ENCODE measurements at regions of chr20 and their contacts with region 1.

Region 1: DNA sequence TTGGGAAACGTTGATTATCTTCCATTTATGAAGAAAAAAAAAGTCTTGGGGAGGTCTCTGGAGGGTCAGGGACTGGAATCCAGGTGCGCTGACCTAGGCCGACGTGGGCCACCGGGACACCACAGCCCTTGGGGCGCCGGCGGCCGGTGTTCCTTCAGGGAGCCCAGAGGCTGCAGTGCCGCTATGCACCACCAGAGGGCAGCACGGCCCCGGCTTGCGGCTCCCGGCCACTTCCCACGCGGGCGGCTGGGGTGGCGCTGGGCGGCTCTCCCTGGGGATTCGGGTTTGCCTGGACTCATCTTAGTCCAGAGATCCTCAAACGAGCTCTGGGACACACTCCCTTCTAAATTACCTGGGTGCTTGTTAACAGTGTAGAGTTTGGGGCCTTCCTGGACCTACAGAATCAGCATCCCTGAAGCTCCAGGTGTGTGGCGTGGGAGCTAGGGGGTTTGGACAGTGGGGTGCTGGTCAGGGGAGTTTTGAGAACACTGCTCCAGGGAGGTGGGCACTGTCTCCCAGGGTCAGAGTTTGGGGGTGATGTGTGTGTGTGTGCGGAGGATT is 23.0 kb upstream of the GTSF1L start:
- DNase-seq: peak; percentile 10 to 35
- ATAC-seq: peak; percentile 52 to 68
- H3K4me3 ChIP-seq: no peak overlapping the region
- H3K27ac ChIP-seq: no peak overlapping the region
- H3K4me1 ChIP-seq: no peaks in the 10 kb centered on the region
- H3K27me3 ChIP-seq: peaks cover 2 to 9% (median 3%) of the 10 kb centered on the region in 3 donors
- CTCF ChIP-seq: peak; percentile 88 to 98 (median 89)
- POLR2A ChIP-seq: no peak

Region 2: DNA sequence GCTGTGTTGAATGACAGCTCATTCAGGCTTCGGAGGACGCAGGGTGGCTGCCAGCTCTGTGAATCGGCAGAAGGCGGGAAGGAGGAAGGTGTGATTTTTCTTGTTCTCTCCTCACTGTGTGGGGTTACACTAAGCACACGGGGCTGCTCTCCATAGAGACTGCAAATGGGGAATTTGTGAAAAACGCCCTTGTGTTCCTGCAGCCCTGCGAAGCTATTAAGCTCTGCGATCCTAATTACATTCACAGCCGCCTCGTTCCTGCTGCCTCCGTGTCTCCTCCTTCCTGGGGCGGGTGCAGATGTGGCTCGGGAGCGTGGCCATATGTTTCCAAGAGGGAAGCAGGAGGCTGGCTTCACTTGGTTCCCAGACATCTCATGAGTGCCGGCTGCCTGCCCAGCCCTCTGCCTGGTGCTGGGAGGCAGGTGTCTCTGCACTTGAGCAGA is 288.9 kb after region 1 on chr20:
- in situ Hi-C with region 1: no loop called
- intact Hi-C with region 1: no loop called
- DNase-seq: no peak
- ATAC-seq: no peak
- H3K4me3 ChIP-seq: no peak overlapping the region
- H3K27ac ChIP-seq: no peak overlapping the region
- H3K4me1 ChIP-seq: no peaks in the 10 kb centered on the region
- H3K27me3 ChIP-seq: peaks cover 6 to 20% (median 11%) of the 10 kb centered on the region in 3 donors
- CTCF ChIP-seq: no peak
- POLR2A ChIP-seq: no peak

Region 3: GRCh38 chr20:44069203-44070011 is 319.6 kb after region 1 on chr20:
- in situ Hi-C with region 1: loop called in 1 of 4 experiments (anchors 10 kb)
- intact Hi-C with region 1: no loop called
- DNase-seq: no peak
- ATAC-seq: no peak
- H3K4me3 ChIP-seq: no peak overlapping the region
- H3K27ac ChIP-seq: no peak overlapping the region
- H3K4me1 ChIP-seq: no peaks in the 10 kb centered on the region
- H3K27me3 ChIP-seq: no peaks in the 10 kb centered on the region
- CTCF ChIP-seq: no peak
- POLR2A ChIP-seq: no peak

Region 4: GRCh38 chr20:44074252-44075151 is 324.7 kb after region 1 on chr20:
- in situ Hi-C with region 1: loop called in 2 of 4 experiments (anchors 5 to 10 kb)
- intact Hi-C with region 1: no loop called
- DNase-seq: peak in 1 of 2 donors; percentile 11
- ATAC-seq: no peak
- H3K4me3 ChIP-seq: no peak overlapping the region
- H3K27ac ChIP-seq: no peak overlapping the region
- H3K4me1 ChIP-seq: no peaks in the 10 kb centered on the region
- H3K27me3 ChIP-seq: no peaks in the 10 kb centered on the region
- CTCF ChIP-seq: no peak
- POLR2A ChIP-seq: no peak

Region 5: DNA sequence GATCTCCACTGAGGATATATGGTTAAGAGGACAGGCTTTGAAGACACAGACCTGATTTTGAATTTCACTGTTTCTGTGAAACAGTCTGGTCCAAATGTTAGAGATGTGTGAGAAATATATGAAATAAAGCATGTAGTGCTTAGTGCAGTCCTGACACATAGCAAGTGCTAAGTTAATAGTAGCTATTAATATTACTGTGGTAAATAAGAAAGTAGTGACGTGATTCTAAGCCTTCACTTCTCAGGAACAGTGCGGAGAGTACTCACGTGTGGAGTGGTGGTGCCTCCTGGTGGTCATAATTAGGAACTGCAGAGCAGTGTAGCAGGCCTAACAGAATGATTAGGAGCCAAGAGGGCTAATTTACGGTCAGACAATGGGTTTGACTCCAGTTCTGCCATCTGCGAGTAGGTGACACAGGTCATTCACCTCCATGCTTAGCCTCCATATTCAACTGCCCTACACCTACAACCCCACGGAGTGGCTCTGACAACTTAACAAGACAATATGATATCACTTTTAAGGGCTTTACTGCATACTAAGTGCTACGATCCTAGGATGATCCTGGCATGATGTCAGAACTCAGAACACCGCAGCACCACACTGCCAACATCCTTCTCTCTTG is 330.9 kb after region 1 on chr20:
- in situ Hi-C with region 1: loop called (anchors 5 to 10 kb)
- intact Hi-C with region 1: loop called (anchors 1 kb)
- DNase-seq: peak; percentile 43 to 57
- ATAC-seq: peak; percentile 59 to 79
- H3K4me3 ChIP-seq: no peak overlapping the region
- H3K27ac ChIP-seq: no peak overlapping the region
- H3K4me1 ChIP-seq: peaks cover 12 to 16% of the 10 kb centered on the region in 2 donors
- H3K27me3 ChIP-seq: no peaks in the 10 kb centered on the region
- CTCF ChIP-seq: peak; percentile 92 to 97 (median 94)
- POLR2A ChIP-seq: no peak

Measured in gastrocnemius medialis (tissue), 4 donors.